Prostate gland (tissue), 2 donors: ENCODE measurements at regions of chr4 and their contacts with region 1.

Region 1: DNA sequence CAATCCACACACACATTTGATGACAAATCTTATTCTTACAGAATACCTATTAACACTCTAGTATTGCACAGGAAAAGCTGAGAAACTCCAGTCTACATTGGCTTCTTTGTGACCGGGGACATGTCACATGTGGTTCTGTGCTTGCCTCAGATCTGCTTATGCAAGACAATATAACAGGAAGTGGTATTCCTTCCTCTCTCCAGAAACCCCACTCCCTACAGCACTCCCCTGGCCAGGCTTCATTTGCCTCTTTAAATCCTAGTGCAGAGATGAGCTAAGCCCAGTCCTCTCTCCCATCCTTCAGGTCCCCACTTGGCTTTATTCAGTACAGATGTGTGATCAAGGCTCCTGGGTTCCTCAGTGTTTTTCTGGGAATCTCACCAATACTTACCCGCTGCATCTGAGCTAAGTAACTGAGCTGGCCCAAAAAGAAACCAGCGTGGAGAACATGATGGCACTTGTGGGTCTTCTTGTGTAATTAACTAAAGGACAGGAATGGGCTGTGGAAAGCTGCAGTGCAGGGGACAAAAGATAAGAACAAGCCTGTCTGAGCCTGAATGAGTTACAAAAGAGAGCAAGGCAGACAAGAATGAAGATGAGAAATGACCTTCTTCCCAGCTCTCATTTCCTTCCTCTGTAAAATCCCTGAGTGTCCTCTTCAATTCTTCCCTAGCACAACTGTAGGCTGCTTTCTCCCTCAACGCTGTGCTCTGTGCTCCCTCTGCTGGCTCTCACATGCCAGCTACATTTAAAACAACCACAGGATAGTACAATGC is 105.6 kb downstream of the HNRNPD start:
- DNase-seq: peak; percentile 68
- H3K4me3 ChIP-seq: no peak overlapping the region
- H3K27ac ChIP-seq: no peak overlapping the region
- H3K4me1 ChIP-seq: no peaks in the 10 kb centered on the region
- H3K27me3 ChIP-seq: no peaks in the 10 kb centered on the region
- CTCF ChIP-seq: peak in 3 of 4 experiments; percentile 64 to 80 (median 77)
- POLR2A ChIP-seq: no peak

Region 2: GRCh38 chr4:81405894-81406401 is 862.3 kb before region 1 on chr4:
- intact Hi-C with region 1: loop called (anchors 5 kb)
- DNase-seq: peak; percentile 59
- H3K4me3 ChIP-seq: no peak overlapping the region
- H3K27ac ChIP-seq: no peak overlapping the region
- H3K4me1 ChIP-seq: no peaks in the 10 kb centered on the region
- H3K27me3 ChIP-seq: no peaks in the 10 kb centered on the region
- CTCF ChIP-seq: peak; percentile 63 to 86 (median 78)
- POLR2A ChIP-seq: no peak

Region 3: GRCh38 chr4:81466841-81467671 is 801.2 kb before region 1 on chr4:
- intact Hi-C with region 1: loop called (anchors 5 kb)
- DNase-seq: peak; percentile 85
- H3K4me3 ChIP-seq: no peak overlapping the region
- H3K27ac ChIP-seq: no peak overlapping the region
- H3K4me1 ChIP-seq: peaks cover 5% of the 10 kb centered on the region
- H3K27me3 ChIP-seq: no peaks in the 10 kb centered on the region
- CTCF ChIP-seq: peak; percentile 73 to 94 (median 88)
- POLR2A ChIP-seq: no peak

Region 4: GRCh38 chr4:82192017-82192673 is 76.1 kb before region 1 on chr4:
- intact Hi-C with region 1: no loop called
- DNase-seq: no peak
- H3K4me3 ChIP-seq: no peak overlapping the region
- H3K27ac ChIP-seq: no peak overlapping the region
- H3K4me1 ChIP-seq: no peaks in the 10 kb centered on the region
- H3K27me3 ChIP-seq: no peaks in the 10 kb centered on the region
- CTCF ChIP-seq: no peak
- POLR2A ChIP-seq: no peak